HEK293 (cell line): ENCODE measurements at regions of chr16 and their contacts with region 1.

Region 1: DNA sequence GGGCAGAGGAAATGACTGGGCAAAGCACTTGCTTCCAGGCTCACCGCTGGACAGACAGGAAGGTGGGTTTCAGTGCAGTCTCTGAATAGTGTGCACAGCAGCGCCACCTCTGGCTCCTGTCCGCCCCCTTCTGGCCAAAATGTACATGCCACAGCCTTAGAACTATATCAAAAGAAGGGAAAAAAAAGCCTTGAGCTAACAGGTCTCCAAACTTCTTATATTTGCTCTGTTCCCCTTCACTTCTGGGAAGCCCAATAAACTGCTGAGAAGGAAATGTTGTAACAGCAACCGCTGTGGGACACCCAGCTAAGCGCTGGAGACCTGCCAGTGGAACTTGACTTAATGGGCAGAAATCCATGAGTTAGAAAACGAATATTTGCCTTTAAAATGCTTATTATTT is 17.5 kb downstream of the COG7 start:
- H3K4me3 ChIP-seq: no peak overlapping the region
- H3K27ac ChIP-seq: no peak overlapping the region
- H3K4me1 ChIP-seq: no peaks in the 10 kb centered on the region
- CTCF ChIP-seq: peak; percentile 83

Region 2: GRCh38 chr16:22898874-22899348 is 536.6 kb before region 1 on chr16:
- CTCF ChIA-PET with region 1: interaction called, 18 read pairs
- POLR2A ChIA-PET with region 1: no interaction called
- H3K4me3 ChIP-seq: no peak overlapping the region
- H3K27ac ChIP-seq: no peak overlapping the region
- H3K4me1 ChIP-seq: no peaks in the 10 kb centered on the region
- CTCF ChIP-seq: peak; percentile 76

Region 3: DNA sequence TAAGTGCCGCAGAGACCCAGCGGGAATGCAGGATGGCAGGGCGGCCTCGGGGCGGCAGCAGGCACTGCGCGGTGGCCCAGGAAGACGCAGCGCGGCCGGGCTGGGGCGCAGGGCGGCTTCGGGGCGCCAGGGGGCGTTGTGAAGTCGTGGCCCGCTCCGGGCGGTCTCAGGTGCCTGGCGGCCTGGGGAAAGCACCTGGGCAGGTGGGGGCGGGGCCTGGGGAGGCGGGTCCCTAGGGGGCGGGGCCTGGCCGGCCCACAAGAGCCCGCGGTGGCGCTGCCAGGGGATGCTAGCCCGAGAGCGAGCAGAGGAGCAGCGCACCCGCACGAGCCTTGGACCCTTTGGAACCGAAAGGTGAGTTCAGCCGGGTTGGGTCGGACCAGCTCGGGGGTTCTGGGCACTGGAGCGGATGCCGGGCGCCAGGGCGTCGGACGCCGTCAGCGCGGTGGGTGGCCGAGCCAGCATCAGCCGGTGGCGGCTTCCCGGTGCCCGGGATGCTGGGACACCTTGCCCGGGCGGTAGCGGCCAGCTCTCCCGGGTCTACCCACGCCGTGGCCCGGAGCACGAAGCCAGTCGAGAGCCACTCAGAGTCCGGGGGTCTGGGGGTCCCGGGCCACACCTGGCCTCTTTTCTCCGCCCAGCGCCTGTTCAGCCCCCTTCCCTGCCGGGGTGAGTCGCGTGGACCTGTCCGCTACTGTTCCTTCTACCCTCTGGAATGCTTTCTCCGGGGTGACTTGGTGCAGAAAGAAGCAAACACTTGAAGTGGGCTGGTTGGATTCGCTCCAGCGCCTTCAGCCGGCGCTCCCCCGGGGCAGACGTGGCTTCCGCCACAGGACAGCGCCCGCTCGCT is 252.8 kb before region 1 on chr16 and contains the start of gene SCNN1G:
- CTCF ChIA-PET with region 1: interaction called, 174 read pairs
- POLR2A ChIA-PET with region 1: no interaction called
- H3K4me3 ChIP-seq: peak within 1 kb of the TSS; percentile 40
- H3K27ac ChIP-seq: no peak within 1 kb of the TSS
- H3K4me1 ChIP-seq: 0 out of 2 replicates have a peak, but pooled peaks cover 2% of the 10 kb centered on the region
- CTCF ChIP-seq: peak; percentile 93; the same call in 1 of the 2 replicates

Region 4: DNA sequence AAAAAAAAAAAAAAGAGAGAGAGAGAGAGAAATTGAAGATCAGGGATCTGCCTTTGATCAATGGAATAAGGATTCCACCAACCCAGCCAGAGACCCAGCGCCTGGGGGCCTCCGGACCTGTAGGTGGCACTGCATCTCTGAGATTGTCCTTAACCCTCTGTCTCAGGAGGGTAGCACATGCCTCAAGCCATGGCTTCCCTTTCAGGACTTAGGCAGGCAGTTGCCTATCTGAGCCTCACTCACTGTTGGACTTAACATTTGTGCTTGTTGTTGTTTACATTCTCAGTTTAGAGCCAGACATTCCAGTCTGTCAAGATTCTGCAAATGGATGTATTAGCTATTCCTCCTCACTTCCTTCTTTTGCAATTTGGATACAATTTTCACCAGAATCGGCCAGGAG is 138.5 kb before region 1 on chr16:
- CTCF ChIA-PET with region 1: interaction called, 16 read pairs
- POLR2A ChIA-PET with region 1: no interaction called
- H3K4me3 ChIP-seq: no peak overlapping the region
- H3K27ac ChIP-seq: no peak overlapping the region
- H3K4me1 ChIP-seq: no peaks in the 10 kb centered on the region
- CTCF ChIP-seq: no peak

Region 5: GRCh38 chr16:23416816-23417215 is 18.7 kb before region 1 on chr16:
- CTCF ChIA-PET with region 1: interaction called, 16 read pairs
- POLR2A ChIA-PET with region 1: interaction called, 3 read pairs
- H3K4me3 ChIP-seq: no peak overlapping the region
- H3K27ac ChIP-seq: no peak overlapping the region
- H3K4me1 ChIP-seq: no peaks in the 10 kb centered on the region
- CTCF ChIP-seq: no peak

Region 6: GRCh38 chr16:23452572-23453337 is 17.3 kb after region 1 on chr16 and contains the start of gene COG7:
- CTCF ChIA-PET with region 1: interaction called, 20 read pairs
- POLR2A ChIA-PET with region 1: interaction called, 7 read pairs
- H3K4me3 ChIP-seq: peak within 1 kb of the TSS; percentile 83
- H3K27ac ChIP-seq: peak within 1 kb of the TSS; percentile 57; the same call in 1 of the 2 replicates
- H3K4me1 ChIP-seq: 0 out of 2 replicates have a peak, but pooled peaks cover 3% of the 10 kb centered on the region
- CTCF ChIP-seq: no peak